ENCODE measurements at regions of chr11 and their contacts with region 1.

Region 1: GRCh38 chr11:112588252-112588694 is 327.6 kb upstream of the PLET1 start:
- DNase-seq: peak; percentile 83
- ATAC-seq: peak; percentile 94
- H3K4me3 ChIP-seq: no peak overlapping the region
- H3K27ac ChIP-seq: no peak overlapping the region
- H3K4me1 ChIP-seq: no peaks in the 10 kb centered on the region
- H3K27me3 ChIP-seq: 0 out of 2 replicates have a peak, but pooled peaks cover 4% of the 10 kb centered on the region
- CTCF ChIP-seq: peak; percentile 64 to 85 (median 81)
- POLR2A ChIP-seq: no peak
- RAD21 ChIP-seq: peak; percentile 93

Region 2: GRCh38 chr11:112613051-112613972 is 25.0 kb after region 1 on chr11:
- CTCF ChIA-PET with region 1: interaction called, 14 read pairs
- POLR2A ChIA-PET with region 1: no interaction called
- RAD21 ChIA-PET with region 1: no interaction called
- intact Hi-C with region 1: no loop called
- DNase-seq: peak; percentile 62
- ATAC-seq: peak; percentile 88
- H3K4me3 ChIP-seq: peak overlapping the region; percentile 17 to 47; a peak in 3 of 4 replicates
- H3K27ac ChIP-seq: peak overlapping the region; percentile 90
- H3K4me1 ChIP-seq: peaks cover 29 to 42% of the 10 kb centered on the region in 2 experiments
- H3K27me3 ChIP-seq: no peaks in the 10 kb centered on the region
- CTCF ChIP-seq: no peak
- POLR2A ChIP-seq: no peak
- RAD21 ChIP-seq: no peak; the same call in 1 of the 2 replicates

Region 3: GRCh38 chr11:112784323-112785073 is 196.2 kb after region 1 on chr11:
- CTCF ChIA-PET with region 1: interaction called, 18 read pairs
- POLR2A ChIA-PET with region 1: no interaction called
- RAD21 ChIA-PET with region 1: no interaction called
- intact Hi-C with region 1: no loop called
- DNase-seq: no peak
- ATAC-seq: no peak; the same call in 1 of the 2 replicates
- H3K4me3 ChIP-seq: no peak overlapping the region
- H3K27ac ChIP-seq: no peak overlapping the region
- H3K4me1 ChIP-seq: peaks cover 9% of the 10 kb centered on the region in 2 experiments
- H3K27me3 ChIP-seq: peaks cover 27% of the 10 kb centered on the region
- CTCF ChIP-seq: no peak
- POLR2A ChIP-seq: no peak
- RAD21 ChIP-seq: no peak

Region 4: GRCh38 chr11:112795142-112795815 is 207.0 kb after region 1 on chr11:
- CTCF ChIA-PET with region 1: interaction called, 70 read pairs
- POLR2A ChIA-PET with region 1: interaction called, 3 read pairs
- RAD21 ChIA-PET with region 1: interaction called, 6 to 11 read pairs
- intact Hi-C with region 1: loop called (anchors 1 kb)
- DNase-seq: peak; percentile 38
- ATAC-seq: peak; percentile 97
- H3K4me3 ChIP-seq: no peak overlapping the region
- H3K27ac ChIP-seq: no peak overlapping the region
- H3K4me1 ChIP-seq: no peaks in the 10 kb centered on the region
- H3K27me3 ChIP-seq: 0 out of 2 replicates have a peak, but pooled peaks cover 5% of the 10 kb centered on the region
- CTCF ChIP-seq: peak; percentile 69 to 91 (median 82); a peak in 5 of 6 replicates
- POLR2A ChIP-seq: no peak
- RAD21 ChIP-seq: peak; percentile 67

Region 5: DNA sequence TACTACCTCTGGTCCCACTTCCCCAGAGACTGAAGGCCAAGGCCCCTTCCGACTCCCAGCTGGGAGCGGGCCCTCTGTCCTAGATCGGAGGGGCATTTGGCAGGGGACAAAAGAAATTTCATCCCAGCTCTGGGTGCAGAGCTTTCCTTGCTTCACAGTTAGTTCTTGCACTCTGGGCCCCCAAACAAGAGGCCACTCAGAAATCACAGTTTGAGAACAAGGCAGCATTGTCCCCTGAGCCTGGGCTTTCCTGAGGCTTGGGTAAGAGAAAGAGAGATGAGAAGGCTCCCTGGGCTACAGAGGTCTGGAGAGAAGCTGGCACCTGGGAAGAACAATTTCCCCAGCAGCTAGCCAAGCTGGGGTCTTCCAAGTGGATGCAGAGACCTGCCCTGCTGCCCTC is 301.2 kb after region 1 on chr11:
- CTCF ChIA-PET with region 1: no interaction called
- POLR2A ChIA-PET with region 1: no interaction called
- RAD21 ChIA-PET with region 1: no interaction called
- intact Hi-C with region 1: no loop called
- DNase-seq: no peak
- ATAC-seq: no peak
- H3K4me3 ChIP-seq: no peak overlapping the region
- H3K27ac ChIP-seq: no peak overlapping the region
- H3K4me1 ChIP-seq: no peaks in the 10 kb centered on the region
- H3K27me3 ChIP-seq: peaks cover 18% of the 10 kb centered on the region
- CTCF ChIP-seq: no peak
- POLR2A ChIP-seq: no peak
- RAD21 ChIP-seq: no peak

Region 6: GRCh38 chr11:113113801-113114706 is 525.8 kb after region 1 on chr11:
- CTCF ChIA-PET with region 1: interaction called, 36 read pairs
- POLR2A ChIA-PET with region 1: no interaction called
- RAD21 ChIA-PET with region 1: interaction called in 1 of 2 experiments, 6 read pairs
- intact Hi-C with region 1: loop called (anchors 1 kb)
- DNase-seq: no peak
- ATAC-seq: peak; percentile 98
- H3K4me3 ChIP-seq: no peak overlapping the region
- H3K27ac ChIP-seq: no peak overlapping the region
- H3K4me1 ChIP-seq: no peaks in the 10 kb centered on the region
- H3K27me3 ChIP-seq: peaks cover 41% of the 10 kb centered on the region; the same call in 1 of the 2 replicates
- CTCF ChIP-seq: peak; percentile 35 to 66 (median 58); a peak in 4 of 6 replicates
- POLR2A ChIP-seq: no peak
- RAD21 ChIP-seq: peak; percentile 63

Region 7: GRCh38 chr11:113289431-113290187 is 701.3 kb after region 1 on chr11:
- CTCF ChIA-PET with region 1: interaction called, 33 read pairs
- POLR2A ChIA-PET with region 1: no interaction called
- RAD21 ChIA-PET with region 1: interaction called, 8 to 10 read pairs
- intact Hi-C with region 1: loop called (anchors 1 kb)
- DNase-seq: peak; percentile 21
- ATAC-seq: peak; percentile 96
- H3K4me3 ChIP-seq: no peak overlapping the region
- H3K27ac ChIP-seq: no peak overlapping the region
- H3K4me1 ChIP-seq: no peaks in the 10 kb centered on the region
- H3K27me3 ChIP-seq: peaks cover 44% of the 10 kb centered on the region
- CTCF ChIP-seq: peak; percentile 60 to 90 (median 88)
- POLR2A ChIP-seq: no peak
- RAD21 ChIP-seq: peak; percentile 90

Measured in HCT116 (cell line).